ENCODE measurements at regions of chr7 and their contacts with region 1.

Region 1: DNA sequence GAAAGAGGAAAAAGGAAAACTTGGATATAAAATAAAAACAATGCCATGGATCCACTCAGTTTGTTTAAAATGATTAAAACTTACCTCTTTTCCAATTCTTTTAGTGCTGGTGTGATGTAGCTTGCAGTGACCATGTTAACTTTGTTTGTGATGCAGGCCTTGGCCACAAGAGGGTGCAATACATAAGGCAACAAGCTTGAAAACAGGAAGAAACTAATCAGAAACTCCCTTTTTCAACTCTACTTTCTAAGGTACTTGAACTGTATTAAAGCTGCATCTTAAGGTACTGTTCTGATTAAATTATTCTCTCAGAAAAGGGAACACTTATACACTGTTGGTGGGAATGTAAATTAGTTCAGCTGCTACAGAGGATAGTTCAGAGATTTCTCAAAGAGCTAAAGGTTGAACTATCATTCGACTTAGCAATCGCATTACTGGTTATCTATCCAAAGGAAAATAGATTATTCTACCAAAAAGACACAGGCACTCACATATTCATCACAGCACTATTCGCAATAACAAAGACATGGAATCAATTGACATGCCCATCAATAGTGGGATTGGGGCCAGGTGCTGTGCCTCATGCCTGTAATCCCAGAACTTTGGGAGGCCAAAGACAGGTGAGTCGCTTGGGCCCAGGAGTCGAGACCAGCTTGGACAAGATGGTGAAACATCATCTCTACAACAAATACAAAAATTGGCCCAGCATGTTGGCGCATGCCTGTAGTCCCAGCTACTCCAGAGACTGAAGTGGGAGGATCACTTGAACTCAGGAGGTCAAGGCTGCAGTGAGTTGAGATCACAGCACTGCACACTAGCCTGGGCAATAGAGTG is 50.9 kb downstream of the AASS start:
- DNase-seq: peak; percentile 19 to 82
- H3K4me3 ChIP-seq: no peak overlapping the region
- H3K27ac ChIP-seq: no peak overlapping the region
- H3K4me1 ChIP-seq: peaks cover 0 to 8% (median 4%) of the 10 kb centered on the region in 4 experiments; a peak in 4 of 7 replicates
- H3K27me3 ChIP-seq: no peaks in the 10 kb centered on the region
- CTCF ChIP-seq: peak in 2 of 3 experiments; percentile 65 to 92; a peak in 3 of 4 replicates
- EP300 ChIP-seq: no peak
- POLR2A ChIP-seq: peak in 1 of 2 experiments; percentile 22; a peak in 2 of 3 replicates
- RAD21 ChIP-seq: peak; percentile 48 to 52

Region 2: DNA sequence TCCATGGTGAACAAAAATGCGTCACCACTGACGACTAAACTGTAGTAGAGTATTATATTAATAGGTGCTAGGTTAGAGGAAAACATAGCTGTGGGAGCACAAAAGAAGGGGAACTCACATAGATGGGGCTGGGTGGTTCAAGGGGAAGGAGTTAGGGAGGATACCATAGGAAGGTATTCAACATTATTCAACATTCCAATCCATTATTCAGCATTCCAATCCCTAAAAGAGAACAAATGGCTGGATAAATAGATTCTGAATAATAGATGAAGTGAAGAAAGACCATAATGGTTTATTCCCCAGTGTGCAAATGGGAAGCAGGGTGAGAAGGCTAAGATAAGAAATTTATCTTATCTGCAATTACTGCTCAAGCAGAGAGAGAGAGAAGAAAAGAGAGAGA is 10.5 kb before region 1 on chr7:
- CTCF ChIA-PET with region 1: interaction called, 44 read pairs
- POLR2A ChIA-PET with region 1: interaction called, 17 read pairs
- DNase-seq: no peak
- H3K4me3 ChIP-seq: no peak overlapping the region
- H3K27ac ChIP-seq: no peak overlapping the region
- H3K4me1 ChIP-seq: peaks cover 0 to 13% (median 8%) of the 10 kb centered on the region in 4 experiments; a peak in 4 of 7 replicates
- H3K27me3 ChIP-seq: no peaks in the 10 kb centered on the region
- CTCF ChIP-seq: no peak
- EP300 ChIP-seq: no peak
- POLR2A ChIP-seq: no peak
- RAD21 ChIP-seq: no peak